GM12878 (cell line): ENCODE measurements at regions of chr9 and their contacts with region 1.

Region 1: GRCh38 chr9:37485389-37486219 is at the start of gene POLR1E:
- DNase-seq: peak; percentile 85
- ATAC-seq: peak; percentile 95
- H3K4me3 ChIP-seq: peak within 1 kb of the TSS; percentile 100
- H3K27ac ChIP-seq: peak within 1 kb of the TSS; percentile 71
- H3K4me1 ChIP-seq: peaks cover 14% of the 10 kb centered on the region
- H3K27me3 ChIP-seq: 0 out of 4 replicates have a peak, but pooled peaks cover 0 to 2% of the 10 kb centered on the region in 2 experiments
- CTCF ChIP-seq: no peak
- EP300 ChIP-seq: no peak; a peak in 1 of 4 replicates
- POLR2A ChIP-seq: peak; percentile 99
- RAD21 ChIP-seq: no peak
- polyA plus RNA-seq, gene POLR1E: 13.7 to 27.6 TPM

Region 2: GRCh38 chr9:37465249-37466036 is 20.2 kb before region 1 on chr9 and contains the start of gene ZBTB5:
- CTCF ChIA-PET with region 1: interaction called, 9 read pairs
- POLR2A ChIA-PET with region 1: interaction called, 28 read pairs
- RAD21 ChIA-PET with region 1: interaction called, 11 read pairs
- SMC1A ChIA-PET with region 1: interaction called, 4 read pairs
- in situ Hi-C with region 1: no loop called
- intact Hi-C with region 1: no loop called
- DNase-seq: peak; percentile 100
- ATAC-seq: peak; percentile 85
- H3K4me3 ChIP-seq: peak within 1 kb of the TSS; percentile 84
- H3K27ac ChIP-seq: peak within 1 kb of the TSS; percentile 92
- H3K4me1 ChIP-seq: no peaks in the 10 kb centered on the region
- H3K27me3 ChIP-seq: no peaks in the 10 kb centered on the region
- CTCF ChIP-seq: no peak
- EP300 ChIP-seq: no peak
- POLR2A ChIP-seq: no peak
- RAD21 ChIP-seq: no peak
- polyA plus RNA-seq, gene ZBTB5: 1.4 to 2.5 TPM

Region 3: DNA sequence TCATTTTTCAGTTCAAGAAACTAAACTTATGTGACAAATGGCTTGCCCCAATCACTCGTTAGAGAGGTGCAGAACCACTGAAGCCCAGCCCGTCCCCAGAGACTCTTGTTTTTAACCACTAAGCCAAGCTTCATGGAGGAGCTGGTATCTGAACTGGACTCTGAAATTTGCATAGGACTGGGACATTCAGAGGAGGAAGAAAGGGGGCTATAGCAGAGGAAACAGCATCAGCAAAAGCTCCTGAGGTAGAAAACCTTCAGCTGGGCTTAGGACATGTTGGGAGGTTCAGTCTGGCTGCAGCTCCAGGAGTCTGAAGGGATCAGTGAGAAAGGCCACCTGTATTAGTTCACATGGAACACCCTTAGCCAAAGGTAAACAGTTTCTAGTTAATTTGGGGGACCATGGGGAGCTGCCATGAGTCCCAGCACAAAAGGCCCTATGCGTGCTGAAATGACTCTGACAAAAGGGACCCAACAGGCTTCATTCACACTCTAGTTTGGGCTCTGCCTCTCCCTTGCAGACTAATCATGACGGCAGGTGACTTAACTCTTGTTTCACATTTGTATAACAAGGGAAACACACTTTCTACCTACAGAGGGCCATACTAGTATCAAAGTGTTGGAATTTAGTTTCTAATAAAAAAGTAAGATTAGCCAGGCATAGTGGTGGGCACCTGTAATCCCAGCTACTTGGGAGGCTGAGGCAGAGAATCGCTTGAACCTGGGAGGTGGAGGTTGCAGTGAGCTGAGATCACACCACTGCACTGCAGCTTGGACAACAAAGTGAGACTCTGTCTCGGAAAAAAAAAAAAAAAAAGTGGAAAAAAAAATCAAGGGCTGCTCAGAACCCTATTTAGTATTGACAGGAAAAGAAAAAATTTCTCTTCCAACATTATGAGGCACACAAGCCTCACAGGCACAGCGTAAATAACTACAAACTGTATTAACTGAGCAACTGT is 80.3 kb after region 1 on chr9:
- CTCF ChIA-PET with region 1: no interaction called
- POLR2A ChIA-PET with region 1: interaction called, 4 read pairs
- RAD21 ChIA-PET with region 1: interaction called, 13 read pairs
- SMC1A ChIA-PET with region 1: interaction called, 8 read pairs
- in situ Hi-C with region 1: no loop called
- intact Hi-C with region 1: no loop called
- DNase-seq: peak; percentile 77
- ATAC-seq: peak; percentile 84
- H3K4me3 ChIP-seq: peak overlapping the region; percentile 57
- H3K27ac ChIP-seq: peak overlapping the region; percentile 95
- H3K4me1 ChIP-seq: peaks cover 53% of the 10 kb centered on the region
- H3K27me3 ChIP-seq: no peaks in the 10 kb centered on the region
- CTCF ChIP-seq: no peak
- EP300 ChIP-seq: no peak
- POLR2A ChIP-seq: peak; percentile 54
- RAD21 ChIP-seq: no peak

Region 4: DNA sequence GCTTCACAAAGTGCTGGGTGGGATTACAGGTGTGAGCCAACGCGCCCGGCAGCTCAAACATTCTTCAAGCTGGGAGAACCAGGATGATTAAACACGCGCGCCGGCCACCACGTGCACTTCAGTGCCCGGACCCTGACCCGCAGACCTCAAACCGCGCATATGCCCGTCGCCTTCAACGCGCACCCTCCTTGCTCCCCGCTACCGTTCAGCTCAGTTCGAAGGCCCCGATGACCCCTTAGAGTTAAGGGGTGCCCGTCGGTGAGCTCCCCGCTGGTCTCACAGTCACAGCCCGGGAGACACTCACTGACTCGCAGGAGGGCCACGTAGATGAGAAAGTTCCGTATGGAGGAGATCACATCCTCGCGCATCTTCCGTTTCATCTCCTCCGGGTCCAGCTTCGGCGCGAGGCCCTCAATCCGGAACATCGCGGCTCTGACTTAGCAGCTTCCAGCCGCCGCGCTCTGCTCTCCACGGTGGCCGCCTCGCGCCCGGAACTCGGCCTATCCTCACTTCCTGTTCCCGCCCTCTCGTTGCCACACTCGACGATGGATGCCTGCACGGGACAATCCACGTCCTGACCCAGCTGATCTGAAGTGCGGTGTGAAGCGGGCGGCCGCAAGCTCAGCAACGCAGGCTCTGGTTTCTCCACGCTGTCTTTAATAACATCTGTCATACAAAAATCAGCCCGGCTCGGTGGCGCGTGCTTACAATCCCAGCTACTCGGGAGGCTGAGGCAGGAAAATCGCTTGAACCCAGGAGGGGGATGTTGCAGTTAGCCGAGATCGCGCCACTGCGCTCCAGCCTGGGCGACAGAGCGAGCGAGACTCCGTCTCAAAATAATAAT is 106.7 kb after region 1 on chr9 and contains the start of gene TOMM5:
- CTCF ChIA-PET with region 1: interaction called, 13 read pairs
- POLR2A ChIA-PET with region 1: interaction called, 13 read pairs
- RAD21 ChIA-PET with region 1: interaction called, 10 read pairs
- SMC1A ChIA-PET with region 1: interaction called, 14 read pairs
- in situ Hi-C with region 1: loop called (anchors 5 kb)
- intact Hi-C with region 1: loop called (anchors 2 kb)
- DNase-seq: peak; percentile 76
- ATAC-seq: peak; percentile 92
- H3K4me3 ChIP-seq: peak within 1 kb of the TSS; percentile 73
- H3K27ac ChIP-seq: peak within 1 kb of the TSS; percentile 94
- H3K4me1 ChIP-seq: peaks cover 8% of the 10 kb centered on the region
- H3K27me3 ChIP-seq: no peaks in the 10 kb centered on the region
- CTCF ChIP-seq: no peak
- EP300 ChIP-seq: no peak
- POLR2A ChIP-seq: peak; percentile 99
- RAD21 ChIP-seq: no peak
- polyA plus RNA-seq, gene TOMM5: 1,100 to 1,143 TPM

Region 5: DNA sequence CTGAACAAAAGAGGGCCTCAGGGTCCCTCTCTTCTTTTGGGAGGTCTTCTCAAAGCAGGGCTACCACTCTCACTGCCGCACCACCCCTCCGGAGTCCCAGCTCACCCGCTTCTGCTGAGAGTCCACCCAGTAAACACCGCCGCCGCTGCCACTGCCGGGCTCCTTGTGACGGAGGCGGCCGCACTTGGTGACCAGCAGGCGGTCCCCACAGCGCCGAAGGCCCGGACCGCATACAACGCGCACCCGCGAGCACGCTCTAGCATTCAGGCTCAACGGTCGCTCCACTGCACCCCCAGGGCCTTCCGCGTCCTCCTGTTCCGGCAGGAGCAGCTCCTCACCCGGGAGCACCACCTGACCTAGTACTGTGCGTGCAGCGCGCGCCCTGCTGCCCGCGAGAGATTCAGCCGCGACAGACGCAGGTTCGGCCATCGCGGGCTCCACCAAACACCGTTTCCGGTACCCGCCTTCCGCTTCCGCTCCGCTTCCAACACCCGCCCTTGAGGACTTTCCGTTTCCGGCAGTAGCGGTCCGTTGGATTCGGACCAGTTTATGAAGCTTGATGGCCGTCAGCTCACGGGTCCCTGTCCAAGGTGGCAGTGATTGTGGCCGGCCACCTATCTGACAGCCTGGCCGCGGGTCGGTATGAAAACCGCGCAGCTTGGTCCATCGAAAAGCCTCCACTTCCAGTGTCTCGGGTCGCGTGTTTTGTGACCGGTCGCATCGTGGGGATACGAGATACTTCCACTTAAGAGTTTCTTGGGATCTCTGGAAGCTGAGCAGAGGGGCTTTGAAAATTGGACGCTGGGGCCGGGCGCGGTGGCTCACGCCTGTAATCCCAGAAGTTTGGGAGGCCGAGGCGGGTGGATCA is 299.2 kb after region 1 on chr9 and contains the start of gene EXOSC3:
- CTCF ChIA-PET with region 1: interaction called, 3 read pairs
- POLR2A ChIA-PET with region 1: no interaction called
- RAD21 ChIA-PET with region 1: interaction called, 3 read pairs
- SMC1A ChIA-PET with region 1: no interaction called
- in situ Hi-C with region 1: no loop called
- intact Hi-C with region 1: loop called (anchors 10 kb)
- DNase-seq: peak; percentile 62
- ATAC-seq: peak; percentile 93
- H3K4me3 ChIP-seq: peak within 1 kb of the TSS; percentile 77
- H3K27ac ChIP-seq: peak within 1 kb of the TSS; percentile 88
- H3K4me1 ChIP-seq: no peaks in the 10 kb centered on the region
- H3K27me3 ChIP-seq: no peaks in the 10 kb centered on the region
- CTCF ChIP-seq: peak in 2 of 3 experiments; percentile 6 to 14; a peak in 2 of 6 replicates
- EP300 ChIP-seq: no peak
- POLR2A ChIP-seq: peak; percentile 100
- RAD21 ChIP-seq: no peak
- polyA plus RNA-seq, gene EXOSC3: 8.2 to 20.3 TPM

Region 6: GRCh38 chr9:38008168-38009034 is 522.8 kb after region 1 on chr9:
- CTCF ChIA-PET with region 1: no interaction called
- POLR2A ChIA-PET with region 1: no interaction called
- RAD21 ChIA-PET with region 1: no interaction called
- SMC1A ChIA-PET with region 1: no interaction called
- in situ Hi-C with region 1: loop called (anchors 25 kb)
- intact Hi-C with region 1: no loop called
- DNase-seq: peak; percentile 56
- ATAC-seq: peak; percentile 91
- H3K4me3 ChIP-seq: no peak overlapping the region
- H3K27ac ChIP-seq: peak overlapping the region; percentile 58
- H3K4me1 ChIP-seq: peaks cover 17% of the 10 kb centered on the region
- H3K27me3 ChIP-seq: no peaks in the 10 kb centered on the region
- CTCF ChIP-seq: no peak
- EP300 ChIP-seq: no peak
- POLR2A ChIP-seq: no peak
- RAD21 ChIP-seq: no peak